PC-3 (cell line): ENCODE measurements at regions of chr12 and their contacts with region 1.

Region 1: GRCh38 chr12:17056546-17056945 is 450.6 kb upstream of the LMO3 start:
- DNase-seq: no peak
- ATAC-seq: no peak
- H3K4me3 ChIP-seq: no peak overlapping the region
- H3K27ac ChIP-seq: no peak overlapping the region
- H3K4me1 ChIP-seq: no peaks in the 10 kb centered on the region
- H3K27me3 ChIP-seq: no peaks in the 10 kb centered on the region
- CTCF ChIP-seq: no peak

Region 2: DNA sequence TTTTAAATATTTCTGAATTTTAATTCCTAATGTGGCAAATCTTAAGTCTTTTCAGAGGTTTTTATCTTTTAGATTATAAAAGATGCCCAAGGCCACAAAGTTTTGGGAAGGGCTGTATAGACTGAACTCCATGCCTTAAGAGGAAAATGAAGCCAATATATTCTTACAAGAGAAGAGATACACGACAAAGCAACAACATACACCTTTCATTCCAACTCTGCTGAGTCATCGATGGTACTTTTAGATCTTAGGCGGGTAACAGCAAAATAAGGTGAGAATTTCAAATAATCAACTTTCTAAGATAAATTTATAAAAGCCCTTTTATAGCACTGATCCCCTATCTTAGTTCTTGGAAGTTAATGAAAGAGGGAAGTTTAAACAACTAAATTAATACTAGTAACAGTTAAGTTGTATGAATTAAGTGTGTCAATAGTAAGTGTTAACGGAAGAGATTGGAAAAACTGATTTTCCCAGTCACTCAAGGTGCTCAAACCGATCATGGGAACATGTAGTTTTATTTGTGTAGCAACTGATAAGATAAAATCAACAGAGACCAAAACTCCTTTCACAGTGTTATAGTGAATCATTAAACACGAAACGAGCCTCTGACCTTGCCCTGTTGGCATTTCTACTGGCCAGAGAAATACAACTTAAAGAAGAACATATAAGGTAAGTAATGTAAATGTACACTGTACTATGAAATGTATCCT is 1186.0 kb after region 1 on chr12:
- CTCF ChIA-PET with region 1: no interaction called
- POLR2A ChIA-PET with region 1: interaction called, 11 read pairs
- intact Hi-C with region 1: no loop called
- DNase-seq: peak; percentile 9
- ATAC-seq: no peak
- H3K4me3 ChIP-seq: no peak overlapping the region
- H3K27ac ChIP-seq: no peak overlapping the region
- H3K4me1 ChIP-seq: peaks cover 7% of the 10 kb centered on the region
- H3K27me3 ChIP-seq: no peaks in the 10 kb centered on the region
- CTCF ChIP-seq: no peak